ENCODE measurements at regions of chr3 and their contacts with region 1.

Region 1: DNA sequence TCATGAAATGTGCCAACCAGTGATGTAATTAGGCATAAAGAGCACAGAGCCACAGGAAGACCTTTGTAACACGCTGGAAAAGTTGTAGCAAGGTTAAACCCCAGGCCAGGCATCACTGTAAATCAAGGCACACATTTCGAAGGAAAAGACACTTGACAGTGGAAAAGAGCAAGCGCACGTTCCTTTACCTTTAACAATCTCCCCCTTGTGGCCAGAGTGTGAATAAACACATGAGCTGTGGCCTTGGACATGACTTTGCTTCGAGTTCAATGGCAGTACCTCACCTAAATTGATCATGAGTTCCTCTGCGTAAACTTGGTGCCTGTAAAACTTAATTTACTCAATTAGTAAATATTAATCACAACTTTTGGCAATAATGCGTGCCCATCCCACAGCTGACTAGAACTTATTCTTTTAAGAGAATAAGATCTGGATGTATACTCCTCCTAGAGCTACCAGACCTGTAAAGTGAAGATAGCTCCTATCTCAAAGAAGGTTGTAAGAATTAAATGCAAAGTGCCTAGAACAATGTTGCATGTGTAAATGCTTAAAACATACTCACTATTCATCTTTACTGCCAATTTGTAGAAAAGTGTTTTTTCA is 757.0 kb upstream of the NECTIN3 start:
- DNase-seq: peak in 33 of 35 experiments; percentile 6 to 75 (median 33)
- ATAC-seq: peak; percentile 64 to 78 (median 72)
- H3K4me3 ChIP-seq: no peak overlapping the region
- H3K4me3 Mint-ChIP-seq: no peak overlapping the region
- H3K27ac ChIP-seq: no peak overlapping the region
- H3K27ac Mint-ChIP-seq: no peak overlapping the region
- H3K4me1 ChIP-seq: peaks cover 0 to 2% of the 10 kb centered on the region in 2 experiments
- H3K4me1 Mint-ChIP-seq: peaks cover 0 to 2% (median 0%) of the 10 kb centered on the region in 3 donors
- H3K27me3 ChIP-seq: no peaks in the 10 kb centered on the region
- H3K27me3 Mint-ChIP-seq: peaks cover 0 to 6% of the 10 kb centered on the region in 2 donors

Region 2: DNA sequence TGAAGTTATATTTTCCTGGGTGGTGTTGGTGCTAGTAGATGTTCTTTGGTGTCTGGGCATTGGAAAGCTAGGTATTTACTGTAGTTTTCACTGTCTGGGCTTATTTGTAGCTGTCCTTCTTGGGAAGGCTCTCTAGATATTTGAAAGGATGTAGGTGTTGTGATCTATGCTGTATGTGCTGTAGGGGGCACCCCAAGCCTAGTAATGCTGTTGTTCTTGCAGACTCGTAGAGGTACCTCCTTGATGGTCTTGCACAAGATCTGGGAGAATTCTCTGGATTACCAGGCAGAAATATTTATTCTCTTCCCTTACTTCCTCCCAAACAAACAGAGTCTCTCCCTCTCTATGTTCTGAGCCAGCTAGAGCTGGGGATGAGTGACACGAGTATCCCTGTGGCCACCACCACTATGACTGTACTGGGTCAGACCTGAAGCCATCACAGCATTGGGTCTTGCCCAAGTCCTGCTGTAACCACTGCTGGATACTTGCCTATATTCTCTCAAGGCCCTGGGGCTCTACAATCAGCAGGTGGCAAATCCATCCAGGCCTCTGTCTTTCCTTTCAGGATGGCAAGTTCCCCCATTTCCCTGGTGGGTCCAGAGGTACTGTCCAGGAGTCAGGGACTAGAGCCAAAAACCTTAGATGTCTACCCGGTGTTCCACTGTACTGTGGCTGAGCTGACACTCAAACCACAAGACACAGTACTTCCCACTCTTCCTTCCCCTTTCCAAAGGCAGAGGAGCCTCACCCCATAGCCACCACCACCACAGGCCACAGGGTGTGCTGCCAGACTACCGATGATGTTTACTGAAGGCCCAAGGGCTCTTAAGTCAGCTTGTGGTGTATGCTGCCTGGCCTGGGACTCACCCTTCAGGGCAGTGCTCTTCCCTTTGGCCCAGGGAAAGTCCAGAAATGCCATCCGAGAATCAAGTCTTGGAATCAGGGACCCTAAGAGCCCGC is 782.1 kb before region 1 on chr3:
- CTCF ChIA-PET with region 1: interaction called, 5 to 13 read pairs
- POLR2A ChIA-PET with region 1: no interaction called
- DNase-seq: peak in 29 of 35 experiments; percentile 7 to 61 (median 28)
- ATAC-seq: peak; percentile 52 to 70 (median 54)
- H3K4me3 ChIP-seq: no peak overlapping the region
- H3K4me3 Mint-ChIP-seq: no peak overlapping the region
- H3K27ac ChIP-seq: no peak overlapping the region
- H3K27ac Mint-ChIP-seq: no peak overlapping the region
- H3K4me1 ChIP-seq: no peaks in the 10 kb centered on the region
- H3K4me1 Mint-ChIP-seq: no peaks in the 10 kb centered on the region
- H3K27me3 ChIP-seq: no peaks in the 10 kb centered on the region
- H3K27me3 Mint-ChIP-seq: peaks cover 0 to 6% of the 10 kb centered on the region in 2 donors

Region 3: DNA sequence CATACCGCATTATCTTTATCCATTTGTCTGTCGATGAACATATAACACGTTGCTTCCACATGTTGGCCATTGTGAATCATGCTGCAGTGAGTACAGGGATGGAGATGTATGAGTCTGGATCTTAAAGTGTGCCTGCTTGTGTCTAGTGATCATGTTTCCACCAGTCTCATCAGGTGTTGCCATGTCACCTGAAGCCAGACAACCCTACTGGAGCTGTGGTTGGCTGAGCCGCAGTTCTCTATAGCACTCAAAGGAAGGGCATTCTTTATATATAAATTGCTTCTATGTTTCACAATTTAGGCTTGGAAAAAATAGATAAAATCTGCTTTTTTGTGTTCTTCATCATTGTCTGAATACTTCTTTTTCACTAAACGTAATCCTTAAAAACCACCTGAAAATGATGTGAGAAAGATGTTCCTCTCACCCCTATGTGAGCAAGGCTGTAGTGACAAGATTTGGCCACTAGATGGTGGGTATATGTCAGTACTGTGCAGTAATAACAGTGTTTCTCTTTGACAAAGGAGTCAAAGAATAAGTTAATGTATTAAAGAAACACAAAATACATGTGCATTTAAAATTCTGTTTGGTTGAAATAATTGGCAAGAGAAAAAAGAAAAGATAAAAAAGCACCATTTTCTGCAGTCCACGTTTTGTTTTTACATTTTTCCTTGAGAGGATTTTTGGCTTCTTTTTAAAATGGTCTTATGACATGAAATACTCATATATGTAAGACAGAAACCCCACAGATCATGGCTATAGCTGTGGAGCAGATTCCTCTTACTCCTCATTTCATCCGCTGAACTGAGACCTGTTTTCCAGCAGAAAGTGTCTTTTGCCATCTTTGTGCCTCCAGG is 582.8 kb before region 1 on chr3:
- CTCF ChIA-PET with region 1: interaction called, 6 to 11 read pairs
- POLR2A ChIA-PET with region 1: no interaction called
- DNase-seq: peak in 34 of 35 experiments; percentile 8 to 80 (median 36)
- ATAC-seq: peak; percentile 79 to 94 (median 81)
- H3K4me3 ChIP-seq: no peak overlapping the region
- H3K4me3 Mint-ChIP-seq: no peak overlapping the region
- H3K27ac ChIP-seq: no peak overlapping the region
- H3K27ac Mint-ChIP-seq: no peak overlapping the region
- H3K4me1 ChIP-seq: no peaks in the 10 kb centered on the region
- H3K4me1 Mint-ChIP-seq: peaks cover 5 to 17% (median 11%) of the 10 kb centered on the region in 3 donors
- H3K27me3 ChIP-seq: no peaks in the 10 kb centered on the region
- H3K27me3 Mint-ChIP-seq: no peaks in the 10 kb centered on the region

Measured in T-cell (primary cell).